ENCODE measurements at regions of chr5 and their contacts with region 1.

Region 1: GRCh38 chr5:36079200-36079761 is 12.6 kb upstream of the UGT3A2 start:
- DNase-seq: peak; percentile 42
- ATAC-seq: peak; percentile 90
- H3K4me3 Mint-ChIP-seq: no peak overlapping the region
- H3K27ac Mint-ChIP-seq: no peak overlapping the region
- H3K4me1 Mint-ChIP-seq: no peaks in the 10 kb centered on the region
- H3K27me3 Mint-ChIP-seq: peaks cover 9% of the 10 kb centered on the region

Region 2: DNA sequence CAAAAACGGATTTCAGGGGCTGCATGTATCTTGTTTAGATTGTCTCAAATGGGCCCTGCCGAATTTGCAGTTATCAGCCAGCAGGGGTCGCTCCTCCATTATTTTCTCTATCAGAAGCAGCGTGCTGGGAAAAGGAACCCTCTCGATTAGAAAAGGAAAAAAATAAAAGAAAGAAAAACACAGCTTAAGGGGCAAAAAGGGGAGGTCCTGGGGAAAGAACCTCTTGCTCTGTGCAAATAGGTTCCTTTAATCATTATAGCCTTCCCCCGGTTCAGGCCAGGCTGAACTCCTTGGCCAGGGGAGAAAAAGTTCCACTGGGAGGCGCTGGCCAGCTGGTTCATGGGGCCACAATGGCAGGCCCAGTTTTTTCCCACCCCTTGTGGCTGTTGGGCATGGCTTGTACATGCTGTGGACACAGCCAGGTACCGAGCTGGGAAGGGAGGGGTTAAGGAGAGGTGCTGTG is 115.9 kb before region 1 on chr5:
- CTCF ChIA-PET with region 1: interaction called, 4 read pairs
- POLR2A ChIA-PET with region 1: no interaction called
- intact Hi-C with region 1: loop called in 1 of 2 experiments (anchors 5 kb)
- DNase-seq: peak; percentile 51
- ATAC-seq: no peak
- H3K4me3 Mint-ChIP-seq: no peak overlapping the region
- H3K27ac Mint-ChIP-seq: no peak overlapping the region
- H3K4me1 Mint-ChIP-seq: no peaks in the 10 kb centered on the region
- H3K27me3 Mint-ChIP-seq: peaks cover 16% of the 10 kb centered on the region

Region 3: GRCh38 chr5:36089989-36090564 is 10.8 kb after region 1 on chr5:
- CTCF ChIA-PET with region 1: interaction called, 45 read pairs
- POLR2A ChIA-PET with region 1: no interaction called
- intact Hi-C with region 1: no loop called
- DNase-seq: peak; percentile 44
- ATAC-seq: peak; percentile 75
- H3K4me3 Mint-ChIP-seq: no peak overlapping the region
- H3K27ac Mint-ChIP-seq: no peak overlapping the region
- H3K4me1 Mint-ChIP-seq: no peaks in the 10 kb centered on the region
- H3K27me3 Mint-ChIP-seq: peaks cover 2% of the 10 kb centered on the region

Region 4: DNA sequence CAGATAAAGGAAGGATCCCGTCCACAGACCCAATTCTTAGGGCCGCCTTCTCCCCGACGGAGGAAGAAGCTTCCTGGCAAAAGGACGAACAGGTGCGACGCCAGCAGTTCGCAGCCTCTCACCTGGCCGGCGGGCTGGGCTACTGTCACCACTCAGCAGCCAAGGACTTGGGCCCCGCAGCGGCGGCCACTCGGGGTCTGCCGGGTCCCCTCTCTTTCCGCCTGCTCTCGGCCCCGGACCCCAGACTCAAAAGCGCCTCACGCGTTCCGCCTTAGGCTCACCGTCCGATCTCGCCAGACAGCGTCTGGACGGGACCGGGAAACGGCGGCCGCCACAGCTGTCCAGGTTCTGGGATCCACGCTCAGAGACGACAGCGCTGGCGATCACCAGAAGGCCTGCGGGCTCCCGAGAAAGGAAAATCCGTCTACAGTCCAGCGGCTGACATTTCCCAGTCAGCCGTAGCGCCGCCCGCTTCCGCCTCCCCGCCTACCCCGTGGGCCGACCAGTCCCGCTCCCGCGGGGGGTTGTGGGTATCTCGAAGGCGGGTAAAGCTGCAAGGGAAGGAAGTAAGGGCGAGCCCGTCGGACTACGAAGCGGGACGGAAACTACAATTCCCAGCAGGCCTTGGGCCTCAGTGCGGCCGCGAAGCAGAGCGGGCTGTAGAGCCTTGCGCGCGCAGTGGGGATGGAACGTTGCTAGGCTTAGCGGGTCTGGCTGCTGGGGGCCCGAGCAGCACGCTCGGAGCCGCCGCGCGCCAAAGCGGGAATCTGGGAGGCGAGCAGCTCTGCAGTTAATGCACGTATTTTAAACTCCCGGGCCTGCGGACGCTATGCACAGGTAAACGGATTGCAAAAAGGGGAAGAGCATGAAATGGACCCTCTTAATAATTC is 72.4 kb after region 1 on chr5 and contains the starts of genes LMBRD2 and SKP2:
- CTCF ChIA-PET with region 1: interaction called, 17 read pairs
- POLR2A ChIA-PET with region 1: no interaction called
- intact Hi-C with region 1: no loop called
- DNase-seq: peak; percentile 98
- ATAC-seq: peak; percentile 99
- H3K4me3 Mint-ChIP-seq: peak within 1 kb of the TSS; percentile 97
- H3K27ac Mint-ChIP-seq: peak within 1 kb of the TSS; percentile 91
- H3K4me1 Mint-ChIP-seq: peaks cover 55% of the 10 kb centered on the region
- H3K27me3 Mint-ChIP-seq: no peaks in the 10 kb centered on the region
- total RNA-seq, gene LMBRD2: 9.3 to 10.2 TPM
- total RNA-seq, gene SKP2: 48.0 to 56.8 TPM

Region 5: GRCh38 chr5:36305571-36306326 is 226.5 kb after region 1 on chr5:
- CTCF ChIA-PET with region 1: interaction called, 7 read pairs
- POLR2A ChIA-PET with region 1: no interaction called
- intact Hi-C with region 1: loop called in 1 of 2 experiments (anchors 2 kb)
- DNase-seq: peak; percentile 54
- ATAC-seq: no peak
- H3K4me3 Mint-ChIP-seq: no peak overlapping the region
- H3K27ac Mint-ChIP-seq: no peak overlapping the region
- H3K4me1 Mint-ChIP-seq: peaks cover 13% of the 10 kb centered on the region
- H3K27me3 Mint-ChIP-seq: peaks cover 4% of the 10 kb centered on the region

Region 6: GRCh38 chr5:36507332-36507952 is 428.2 kb after region 1 on chr5:
- CTCF ChIA-PET with region 1: interaction called, 22 read pairs
- POLR2A ChIA-PET with region 1: no interaction called
- intact Hi-C with region 1: loop called (anchors 1 kb)
- DNase-seq: peak; percentile 87
- ATAC-seq: no peak
- H3K4me3 Mint-ChIP-seq: no peak overlapping the region
- H3K27ac Mint-ChIP-seq: no peak overlapping the region
- H3K4me1 Mint-ChIP-seq: no peaks in the 10 kb centered on the region
- H3K27me3 Mint-ChIP-seq: peaks cover 7% of the 10 kb centered on the region

Region 7: DNA sequence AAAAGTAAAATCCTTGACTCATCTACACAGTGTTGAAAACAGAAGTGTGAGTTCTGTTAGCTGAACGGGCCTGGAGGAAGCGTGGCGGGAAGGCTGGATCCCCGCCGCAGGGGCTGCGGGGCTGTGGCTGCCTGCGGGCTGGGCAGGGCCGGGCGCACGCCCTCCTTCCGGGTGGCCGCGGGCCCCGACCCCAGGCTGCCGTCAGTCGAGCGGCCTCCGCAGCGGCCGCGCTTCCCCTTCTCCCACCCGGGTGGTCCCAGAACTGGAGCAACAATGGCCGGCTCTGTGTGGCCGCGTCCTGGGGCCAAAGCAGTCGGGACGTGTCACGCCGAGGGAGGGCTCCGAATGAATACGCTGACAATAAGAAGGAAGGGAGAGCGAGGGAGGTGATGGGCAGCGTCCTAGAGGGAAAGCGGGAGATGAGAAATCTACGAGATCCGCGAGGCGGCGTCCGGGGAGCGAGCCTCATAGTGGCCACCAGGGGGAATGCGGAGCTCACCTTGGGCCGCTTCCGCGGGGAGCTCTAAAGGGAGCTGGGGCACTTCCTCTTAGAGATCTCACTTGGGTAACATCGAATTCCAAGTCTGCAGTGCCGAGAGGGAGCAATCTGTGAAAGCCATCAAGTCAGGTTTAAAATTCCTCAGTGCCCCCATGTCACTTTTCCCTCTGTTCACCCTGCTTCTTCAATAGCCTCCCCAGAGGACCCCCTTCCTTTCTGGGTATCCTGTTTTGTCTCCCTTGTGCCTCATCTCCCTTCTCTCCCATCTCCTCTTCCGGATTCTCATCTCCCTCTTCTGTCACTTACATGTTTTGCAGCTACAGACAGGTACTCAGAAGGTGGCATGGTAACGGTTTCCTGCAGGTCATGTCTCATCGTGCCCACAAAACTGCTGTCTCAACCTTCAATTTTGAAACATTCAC is 611.0 kb after region 1 on chr5:
- CTCF ChIA-PET with region 1: no interaction called
- POLR2A ChIA-PET with region 1: no interaction called
- intact Hi-C with region 1: loop called (anchors 2 to 5 kb)
- DNase-seq: peak; percentile 85
- ATAC-seq: peak; percentile 87
- H3K4me3 Mint-ChIP-seq: peak overlapping the region; percentile 75
- H3K27ac Mint-ChIP-seq: peak overlapping the region; percentile 66
- H3K4me1 Mint-ChIP-seq: peaks cover 12% of the 10 kb centered on the region
- H3K27me3 Mint-ChIP-seq: peaks cover 23% of the 10 kb centered on the region